ENCODE measurements at regions of chr2 and their contacts with region 1.

Region 1: GRCh38 chr2:229392196-229392595 is 121.1 kb upstream of the PID1 start:
- DNase-seq: peak; percentile 35
- H3K4me3 ChIP-seq: no peak overlapping the region
- CTCF ChIP-seq: no peak

Region 2: DNA sequence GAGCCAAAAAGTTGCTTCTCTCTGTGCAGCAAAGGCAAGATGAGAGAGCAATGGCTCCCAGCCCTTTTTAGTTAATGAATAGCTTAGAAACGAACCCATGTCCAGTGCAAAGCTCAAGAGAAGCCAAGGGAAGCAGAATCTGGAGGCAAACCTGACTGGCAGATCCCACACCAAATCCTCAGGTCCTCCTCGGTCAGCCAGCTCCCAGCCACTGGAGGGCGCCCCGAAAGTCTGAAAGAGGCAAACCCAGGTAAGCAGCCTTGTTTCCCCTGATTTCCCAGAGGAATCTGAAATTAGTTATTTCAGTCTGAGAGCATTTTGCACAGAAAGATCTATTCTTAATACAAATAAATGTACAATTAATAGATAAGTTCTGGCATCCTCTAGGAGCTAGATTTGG is 49.8 kb before region 1 on chr2:
- in situ Hi-C with region 1: loop called (anchors 5 kb)
- DNase-seq: no peak
- H3K4me3 ChIP-seq: no peak overlapping the region
- CTCF ChIP-seq: peak; percentile 57